ENCODE measurements at regions of chr2 and their contacts with region 1.

Region 1: DNA sequence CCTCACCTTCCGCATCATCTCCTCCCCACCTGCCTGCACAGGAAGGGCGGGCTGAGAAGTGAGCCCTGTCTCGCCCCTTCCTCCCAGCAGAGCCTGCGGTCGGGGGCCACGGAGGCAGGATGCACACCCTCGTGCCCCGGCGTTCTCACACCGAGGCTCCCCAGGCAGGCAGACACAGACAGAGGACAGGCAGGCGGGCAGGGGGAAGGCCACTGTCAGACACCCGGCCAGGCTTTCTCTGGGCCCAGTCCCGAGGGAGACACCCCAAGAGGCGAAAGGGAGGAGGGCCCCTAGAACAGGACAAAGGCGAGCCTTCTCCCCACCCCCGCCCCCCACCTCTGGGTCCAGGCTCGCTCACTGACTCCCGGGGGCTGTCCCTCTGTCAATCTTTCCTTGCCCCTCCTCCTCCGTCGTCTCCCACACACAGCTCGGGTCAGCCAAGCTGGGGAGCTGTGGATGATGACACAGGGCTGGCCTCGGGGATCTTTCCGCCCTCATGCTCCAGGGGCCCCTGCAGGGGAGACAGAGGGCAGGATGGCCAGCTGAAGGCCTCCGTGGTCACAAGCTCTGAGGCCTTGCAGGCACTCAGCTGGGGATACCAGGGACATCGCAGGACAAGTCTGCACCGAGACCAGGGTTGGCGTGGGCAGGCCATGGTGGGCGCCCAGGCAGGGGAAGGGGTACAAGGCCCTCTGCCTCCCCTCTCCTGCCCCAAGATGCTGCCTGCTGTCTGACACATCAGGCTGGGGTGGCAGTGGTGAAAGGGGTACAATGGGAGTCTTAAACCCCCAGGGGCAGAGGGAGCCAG is 24.9 kb downstream of the BIN1 start:
- DNase-seq: peak; percentile 69 to 92 (median 84)
- H3K4me3 ChIP-seq: peak overlapping the region; percentile 93
- H3K4me3 Mint-ChIP-seq: peak overlapping the region; percentile 89 to 96 (median 92)
- H3K27ac ChIP-seq: peak overlapping the region; percentile 87
- H3K27ac Mint-ChIP-seq: peak overlapping the region; percentile 95 to 100 (median 98)
- H3K4me1 ChIP-seq: peaks cover 86% of the 10 kb centered on the region
- H3K4me1 Mint-ChIP-seq: peaks cover 78 to 94% (median 87%) of the 10 kb centered on the region in 3 donors
- H3K27me3 ChIP-seq: no peaks in the 10 kb centered on the region
- H3K27me3 Mint-ChIP-seq: no peaks in the 10 kb centered on the region

Region 2: GRCh38 chr2:127049927-127050802 is 31.9 kb before region 1 on chr2:
- CTCF ChIA-PET with region 1: interaction called, 21 read pairs
- POLR2A ChIA-PET with region 1: no interaction called
- DNase-seq: peak; percentile 44 to 67 (median 53)
- H3K4me3 ChIP-seq: no peak overlapping the region
- H3K4me3 Mint-ChIP-seq: no peak overlapping the region
- H3K27ac ChIP-seq: no peak overlapping the region
- H3K27ac Mint-ChIP-seq: peak overlapping the region in 4 of 8 donors; percentile 45 to 80 (median 54)
- H3K4me1 ChIP-seq: peaks cover 3% of the 10 kb centered on the region
- H3K4me1 Mint-ChIP-seq: peaks cover 12 to 30% (median 13%) of the 10 kb centered on the region in 3 donors
- H3K27me3 ChIP-seq: no peaks in the 10 kb centered on the region
- H3K27me3 Mint-ChIP-seq: no peaks in the 10 kb centered on the region

Region 3: DNA sequence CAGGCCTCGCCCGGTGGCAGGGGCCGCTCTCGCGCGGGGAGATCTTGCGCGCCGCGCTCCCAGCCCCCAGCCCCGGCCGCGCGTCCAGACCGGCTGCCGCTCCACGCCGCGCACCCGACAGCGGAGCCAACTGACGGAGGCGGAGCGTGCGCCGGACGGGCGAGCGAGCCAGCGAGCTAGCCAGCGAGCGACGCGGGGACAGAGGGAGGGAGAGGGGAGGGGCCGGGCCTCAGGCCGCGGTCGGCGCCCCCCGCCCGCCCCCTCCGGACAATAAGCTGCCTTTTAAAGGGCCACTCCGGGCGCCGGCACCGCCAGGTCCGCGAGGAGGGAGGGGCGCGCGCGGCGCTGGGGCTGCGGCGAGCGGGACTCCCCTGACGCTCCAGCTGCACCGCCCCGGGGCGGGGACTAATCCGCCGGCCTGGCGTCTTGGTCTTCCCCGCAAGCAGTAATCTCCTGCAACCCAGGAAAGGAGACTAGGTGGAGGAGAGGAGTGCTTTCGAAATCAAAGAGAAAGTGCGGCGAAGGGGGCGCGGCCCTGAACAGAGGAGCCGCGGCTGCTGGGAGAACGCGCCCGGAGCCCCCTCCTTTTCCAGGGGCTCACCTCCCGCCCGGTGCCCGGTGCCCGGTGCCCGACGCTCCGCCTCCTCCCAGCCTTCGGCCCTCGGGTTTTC is 25.1 kb after region 1 on chr2 and contains the start of gene BIN1:
- CTCF ChIA-PET with region 1: interaction called, 7 read pairs
- POLR2A ChIA-PET with region 1: interaction called, 23 read pairs
- DNase-seq: peak; percentile 24 to 79 (median 68)
- H3K4me3 ChIP-seq: peak within 1 kb of the TSS; percentile 43
- H3K4me3 Mint-ChIP-seq: peak within 1 kb of the TSS; percentile 79 to 95 (median 87)
- H3K27ac ChIP-seq: no peak within 1 kb of the TSS
- H3K27ac Mint-ChIP-seq: peak within 1 kb of the TSS in 5 of 8 donors; percentile 47 to 74 (median 65)
- H3K4me1 ChIP-seq: peaks cover 13% of the 10 kb centered on the region
- H3K4me1 Mint-ChIP-seq: peaks cover 4 to 9% (median 5%) of the 10 kb centered on the region in 3 donors
- H3K27me3 ChIP-seq: peaks cover 4% of the 10 kb centered on the region
- H3K27me3 Mint-ChIP-seq: peaks cover 7 to 10% of the 10 kb centered on the region in 2 donors
- total RNA-seq, gene BIN1: 84.9 to 87.3 TPM

Region 4: DNA sequence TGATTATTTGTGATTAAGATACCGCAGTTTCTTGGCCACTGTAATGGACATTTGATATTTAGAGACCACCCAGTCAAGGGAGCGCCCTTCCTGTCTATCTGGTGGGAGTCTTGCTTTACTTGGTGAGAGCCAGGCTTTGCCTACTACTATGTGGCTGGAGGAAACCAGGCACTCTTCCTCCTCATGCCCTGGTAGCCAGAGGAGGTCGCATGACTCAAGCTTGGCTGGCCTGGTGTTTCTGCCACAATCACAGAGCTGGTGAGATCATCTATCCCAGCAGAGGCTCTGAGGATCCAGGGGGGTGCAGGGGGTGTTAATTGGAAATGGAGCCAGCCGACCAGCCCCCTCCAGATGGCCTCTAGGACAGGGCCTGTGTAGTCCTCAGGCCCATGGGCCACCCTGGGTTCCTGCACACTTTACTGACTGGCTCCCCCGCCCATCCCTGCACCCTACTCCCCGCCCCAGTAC is 71.7 kb after region 1 on chr2:
- CTCF ChIA-PET with region 1: no interaction called
- POLR2A ChIA-PET with region 1: no interaction called
- DNase-seq: no peak
- H3K4me3 ChIP-seq: no peak overlapping the region
- H3K4me3 Mint-ChIP-seq: no peak overlapping the region
- H3K27ac ChIP-seq: no peak overlapping the region
- H3K27ac Mint-ChIP-seq: no peak overlapping the region
- H3K4me1 ChIP-seq: no peaks in the 10 kb centered on the region
- H3K4me1 Mint-ChIP-seq: no peaks in the 10 kb centered on the region
- H3K27me3 ChIP-seq: peaks cover 6% of the 10 kb centered on the region
- H3K27me3 Mint-ChIP-seq: peaks cover under 1 to 4% of the 10 kb centered on the region in 2 donors